ENCODE measurements at regions of chr18 and their contacts with region 1.

Region 1: GRCh38 chr18:3062798-3063680 is 50.1 kb upstream of the LPIN2 start:
- DNase-seq: peak; percentile 88
- ATAC-seq: peak; percentile 34
- H3K4me3 Mint-ChIP-seq: peak overlapping the region; percentile 2
- H3K27ac Mint-ChIP-seq: peak overlapping the region; percentile 99
- H3K4me1 Mint-ChIP-seq: peaks cover 65% of the 10 kb centered on the region
- H3K27me3 Mint-ChIP-seq: no peaks in the 10 kb centered on the region

Region 2: DNA sequence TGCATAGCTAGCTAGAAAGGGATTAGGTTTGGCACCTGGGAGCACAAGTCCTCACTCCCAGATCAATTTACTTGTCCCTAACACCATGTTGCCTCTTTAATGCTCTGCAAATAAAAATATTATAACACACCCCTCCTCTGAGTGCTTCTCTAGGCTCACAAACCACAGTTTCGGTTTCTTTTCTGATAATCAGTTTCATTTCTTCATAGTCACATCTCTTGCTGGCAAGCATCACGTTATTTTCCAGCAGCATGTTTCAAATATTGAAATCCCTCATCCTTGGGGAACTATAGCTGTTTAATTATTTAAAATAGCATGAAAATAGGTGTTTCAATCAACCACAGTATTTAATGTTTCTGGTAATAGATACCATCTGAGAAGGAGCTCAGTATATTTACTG is 421.4 kb before region 1 on chr18:
- CTCF ChIA-PET with region 1: no interaction called
- POLR2A ChIA-PET with region 1: no interaction called
- intact Hi-C with region 1: loop called in 1 of 2 experiments (anchors 5 kb)
- DNase-seq: no peak
- ATAC-seq: peak; percentile 71
- H3K4me3 Mint-ChIP-seq: peak overlapping the region; percentile 63
- H3K27ac Mint-ChIP-seq: no peak overlapping the region
- H3K4me1 Mint-ChIP-seq: peaks cover 51% of the 10 kb centered on the region
- H3K27me3 Mint-ChIP-seq: no peaks in the 10 kb centered on the region

Region 3: DNA sequence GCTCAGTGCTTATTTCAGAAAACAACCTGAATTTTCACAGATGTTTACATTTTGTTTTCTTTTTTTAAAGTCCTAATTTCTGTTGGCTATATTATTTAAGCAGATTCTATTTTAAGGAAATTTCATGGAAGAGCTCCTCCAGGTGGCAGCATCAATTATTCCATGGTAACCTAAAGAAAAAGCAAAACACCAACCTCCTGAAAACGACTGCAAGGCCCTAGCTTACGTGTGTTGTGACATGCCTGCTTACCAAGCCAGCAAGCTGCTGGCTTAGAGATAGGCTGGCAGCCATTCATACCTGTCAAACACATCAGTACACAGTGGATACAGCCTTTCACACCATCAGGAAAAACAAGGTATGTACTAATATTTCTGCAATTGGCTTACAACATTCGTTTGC is 115.0 kb before region 1 on chr18:
- CTCF ChIA-PET with region 1: interaction called, 11 read pairs
- POLR2A ChIA-PET with region 1: no interaction called
- intact Hi-C with region 1: no loop called
- DNase-seq: no peak
- ATAC-seq: peak; percentile 70
- H3K4me3 Mint-ChIP-seq: no peak overlapping the region
- H3K27ac Mint-ChIP-seq: no peak overlapping the region
- H3K4me1 Mint-ChIP-seq: peaks cover 53% of the 10 kb centered on the region
- H3K27me3 Mint-ChIP-seq: no peaks in the 10 kb centered on the region

Region 4: DNA sequence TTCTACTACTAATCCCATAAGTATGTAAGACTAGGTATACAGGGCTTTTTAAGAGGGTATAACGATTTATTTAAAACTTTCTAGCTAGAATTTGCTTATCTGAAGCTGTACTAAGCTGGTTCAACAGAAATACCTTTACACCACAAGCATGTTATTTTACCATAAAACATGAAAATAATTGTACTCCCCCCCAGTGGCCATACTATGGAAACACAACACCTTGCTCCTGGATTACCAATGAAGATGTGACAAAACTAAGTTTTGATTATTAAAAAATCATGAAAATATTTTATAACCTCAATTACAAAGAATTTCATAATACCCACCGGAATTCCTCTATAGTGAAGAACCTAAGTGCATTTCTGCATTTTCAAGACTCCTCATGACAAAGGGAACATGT is 77.4 kb before region 1 on chr18:
- CTCF ChIA-PET with region 1: interaction called, 20 read pairs
- POLR2A ChIA-PET with region 1: no interaction called
- intact Hi-C with region 1: loop called (anchors 1 kb)
- DNase-seq: no peak
- ATAC-seq: no peak
- H3K4me3 Mint-ChIP-seq: no peak overlapping the region
- H3K27ac Mint-ChIP-seq: no peak overlapping the region
- H3K4me1 Mint-ChIP-seq: peaks cover 75% of the 10 kb centered on the region
- H3K27me3 Mint-ChIP-seq: no peaks in the 10 kb centered on the region

Region 5: DNA sequence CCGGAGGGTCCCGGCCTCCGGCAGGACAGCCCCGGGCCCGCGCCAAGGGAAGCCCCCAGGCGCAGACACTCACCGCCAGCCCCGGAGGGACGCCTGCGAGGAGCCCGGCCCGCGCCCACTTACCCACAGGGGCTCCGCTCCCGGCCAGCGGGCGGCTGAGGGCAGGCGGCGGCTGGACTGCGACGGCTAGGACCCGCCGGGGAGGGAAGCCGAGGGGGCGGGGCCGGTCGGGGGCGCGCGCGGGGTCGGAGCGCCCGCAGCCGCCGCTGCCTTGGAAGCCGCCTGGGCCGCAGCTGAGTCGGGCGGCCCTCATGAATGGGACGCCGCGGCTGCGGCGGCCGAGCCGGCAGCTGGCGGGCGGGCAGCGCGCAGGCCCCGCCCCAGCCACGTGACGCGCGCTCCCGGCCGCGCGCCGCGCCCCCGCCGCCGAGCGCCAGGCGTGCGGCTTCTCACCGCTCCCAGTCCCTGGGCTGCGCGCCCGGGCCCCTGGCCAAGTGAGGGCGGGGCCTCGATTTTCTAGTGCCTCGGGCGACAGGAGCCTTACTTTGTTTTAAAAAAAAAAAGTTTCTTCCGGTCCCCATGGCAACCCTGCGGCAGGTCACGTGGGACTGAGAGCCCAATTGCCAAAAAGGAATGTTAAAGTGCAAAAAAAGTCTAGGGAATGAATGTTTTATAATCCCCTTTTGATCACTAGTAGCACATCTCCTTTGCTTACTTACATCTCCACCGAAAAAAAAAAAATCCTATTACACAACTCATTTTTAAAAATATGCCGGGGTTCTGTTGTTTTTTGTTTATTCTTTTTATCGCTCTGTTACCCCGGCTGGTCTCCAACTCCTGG is 49.9 kb before region 1 on chr18 and contains the start of gene LPIN2:
- CTCF ChIA-PET with region 1: interaction called, 5 read pairs
- POLR2A ChIA-PET with region 1: no interaction called
- intact Hi-C with region 1: loop called (anchors 1 kb)
- DNase-seq: peak; percentile 98
- ATAC-seq: peak; percentile 96
- H3K4me3 Mint-ChIP-seq: peak within 1 kb of the TSS; percentile 95
- H3K27ac Mint-ChIP-seq: peak within 1 kb of the TSS; percentile 94
- H3K4me1 Mint-ChIP-seq: peaks cover 66% of the 10 kb centered on the region
- H3K27me3 Mint-ChIP-seq: no peaks in the 10 kb centered on the region
- total RNA-seq, gene LPIN2: 82.6 to 95.3 TPM

Region 6: GRCh38 chr18:3074087-3074486 is 11.0 kb after region 1 on chr18:
- CTCF ChIA-PET with region 1: interaction called, 67 read pairs
- POLR2A ChIA-PET with region 1: interaction called, 3 read pairs
- intact Hi-C with region 1: loop called (anchors 1 kb)
- DNase-seq: no peak
- ATAC-seq: no peak
- H3K4me3 Mint-ChIP-seq: no peak overlapping the region
- H3K27ac Mint-ChIP-seq: no peak overlapping the region
- H3K4me1 Mint-ChIP-seq: peaks cover 28% of the 10 kb centered on the region
- H3K27me3 Mint-ChIP-seq: no peaks in the 10 kb centered on the region

Region 7: GRCh38 chr18:3245853-3246634 is 183.0 kb after region 1 on chr18:
- CTCF ChIA-PET with region 1: interaction called, 11 read pairs
- POLR2A ChIA-PET with region 1: interaction called, 4 read pairs
- intact Hi-C with region 1: loop called (anchors 2 kb)
- DNase-seq: peak; percentile 92
- ATAC-seq: peak; percentile 55
- H3K4me3 Mint-ChIP-seq: peak overlapping the region; percentile 76
- H3K27ac Mint-ChIP-seq: peak overlapping the region; percentile 97
- H3K4me1 Mint-ChIP-seq: peaks cover 26% of the 10 kb centered on the region
- H3K27me3 Mint-ChIP-seq: no peaks in the 10 kb centered on the region

Measured in activated CD4-positive, alpha-beta T cell treated with anti-CD3 and anti-CD28 coated beads for 36 hours (primary cell).